ENCODE measurements at regions of chr12 and their contacts with region 1.

Region 1: DNA sequence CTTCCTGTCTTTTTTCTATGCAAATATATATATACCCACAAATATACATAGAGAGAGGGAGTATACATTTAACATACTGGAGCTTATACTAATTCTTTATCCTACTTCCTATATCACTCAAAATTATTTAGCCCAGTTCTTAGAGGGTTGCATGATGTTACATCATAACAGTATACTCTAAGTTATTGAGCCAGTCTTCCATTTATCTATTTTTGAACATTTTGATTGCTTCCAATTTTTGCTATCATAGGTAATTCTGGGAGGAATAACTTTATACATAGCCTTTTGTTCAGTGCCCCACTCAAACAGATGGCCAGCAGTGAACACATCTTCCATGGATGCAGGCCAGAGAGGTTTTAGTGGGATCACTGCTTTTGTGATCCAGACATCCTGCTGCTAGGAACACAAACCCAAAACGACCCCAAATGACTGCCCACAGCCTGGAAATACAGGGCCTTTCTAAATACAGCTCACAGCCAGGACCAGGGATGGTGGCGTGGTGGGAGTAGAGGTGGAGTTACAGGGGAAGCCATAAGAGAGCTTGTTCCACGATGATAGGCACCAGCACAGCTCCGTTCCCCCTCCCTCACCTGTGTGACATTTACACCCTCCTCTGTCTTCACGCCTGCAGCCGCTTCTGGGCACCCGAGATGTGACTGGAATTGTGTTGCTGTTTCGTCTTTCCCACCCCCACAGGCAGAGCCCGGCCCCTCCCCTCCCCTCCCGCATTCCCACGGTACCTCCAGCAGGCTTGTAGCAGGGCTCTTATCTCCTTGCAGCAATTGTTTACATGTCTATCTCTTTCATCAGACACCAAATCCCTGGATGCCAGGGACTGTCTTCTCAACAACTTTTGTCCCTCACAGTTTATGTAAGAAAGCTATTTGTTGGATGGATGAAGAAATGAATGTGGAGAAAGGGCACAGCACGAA is 30.7 kb upstream of the HDAC7 start:
- DNase-seq: no peak
- H3K4me3 ChIP-seq: no peak overlapping the region
- H3K27me3 ChIP-seq: no peaks in the 10 kb centered on the region
- CTCF ChIP-seq: no peak

Region 2: GRCh38 chr12:47651368-47652254 is 198.8 kb before region 1 on chr12:
- CTCF ChIA-PET with region 1: no interaction called
- POLR2A ChIA-PET with region 1: no interaction called
- DNase-seq: no peak
- H3K4me3 ChIP-seq: no peak overlapping the region
- H3K27me3 ChIP-seq: no peaks in the 10 kb centered on the region
- CTCF ChIP-seq: peak; percentile 69

Region 3: DNA sequence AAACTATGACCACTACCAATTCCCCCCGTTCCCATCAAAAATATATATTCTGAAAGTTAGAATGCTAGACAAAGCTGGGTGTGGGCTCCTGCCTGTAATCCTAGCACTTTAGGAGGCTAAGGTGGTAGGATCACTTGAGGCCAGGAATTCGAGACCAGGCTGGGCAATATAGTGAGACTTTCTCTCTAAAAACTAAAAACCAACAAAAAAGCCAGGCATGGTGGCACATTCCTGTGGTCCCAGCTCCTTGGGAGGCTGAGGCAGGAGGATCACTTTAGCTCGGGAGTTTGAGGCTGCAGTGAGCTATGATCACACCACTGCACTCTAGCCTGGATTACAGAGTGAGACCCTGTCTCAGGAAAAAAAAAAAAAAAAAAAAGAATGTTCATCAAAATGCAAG is 202.7 kb after region 1 on chr12:
- CTCF ChIA-PET with region 1: no interaction called
- POLR2A ChIA-PET with region 1: interaction called, 27 read pairs
- DNase-seq: no peak
- H3K4me3 ChIP-seq: no peak overlapping the region
- H3K27me3 ChIP-seq: no peaks in the 10 kb centered on the region
- CTCF ChIP-seq: no peak

Measured in BJ (cell line).